A549 (cell line): ENCODE measurements at regions of chr11 and their contacts with region 1.

Region 1: DNA sequence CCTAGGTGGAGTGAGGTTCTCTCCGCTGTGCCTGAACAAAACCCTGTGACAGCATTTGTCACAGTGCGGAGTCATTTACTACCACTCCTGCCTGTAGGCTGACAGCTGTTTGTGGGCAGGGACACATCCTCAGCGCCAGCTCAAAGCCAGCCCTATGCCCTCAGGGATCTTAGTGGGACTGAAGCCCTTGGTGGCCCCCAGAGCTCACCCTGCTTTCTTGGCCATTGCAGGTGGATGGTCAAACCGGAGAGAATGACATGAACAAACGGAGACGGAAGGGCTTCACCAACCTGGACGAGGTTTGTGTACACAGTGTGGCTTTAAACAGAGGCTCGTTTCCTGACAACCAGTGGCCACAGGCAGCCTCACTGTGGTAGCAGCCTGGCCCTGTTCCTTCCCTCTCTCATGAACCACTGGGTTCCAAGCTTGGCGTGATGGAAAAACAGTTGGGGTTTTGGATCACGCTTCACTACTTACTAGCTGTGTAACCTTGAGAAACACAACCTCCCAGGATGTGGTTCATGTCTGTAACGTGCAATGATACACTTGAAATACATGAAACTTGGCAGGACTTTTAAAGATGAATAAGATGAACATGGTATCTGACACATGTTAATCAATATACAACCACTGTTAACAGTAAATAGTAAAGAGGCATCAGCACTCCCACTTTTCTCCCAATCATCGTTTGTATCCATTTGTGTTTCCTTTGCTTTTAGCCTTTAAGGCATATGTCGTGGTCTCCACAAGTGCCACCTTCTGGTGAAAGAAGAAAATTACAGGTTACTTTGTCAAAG is 125.8 kb downstream of the MICAL2 start:
- DNase-seq: peak; percentile 58 to 62
- ATAC-seq: peak; percentile 51 to 70; a peak in 4 of 6 replicates
- H3K4me3 ChIP-seq: no peak overlapping the region
- H3K27ac ChIP-seq: peak overlapping the region; percentile 81 to 87
- H3K4me1 ChIP-seq: peaks cover 58% of the 10 kb centered on the region
- CTCF ChIP-seq: peak; percentile 83
- EP300 ChIP-seq: no peak
- POLR2A ChIP-seq: no peak
- RAD21 ChIP-seq: peak; percentile 73 to 76

Region 2: GRCh38 chr11:12052676-12053605 is 183.2 kb before region 1 on chr11:
- CTCF ChIA-PET with region 1: interaction called, 115 read pairs
- POLR2A ChIA-PET with region 1: no interaction called
- DNase-seq: peak in 1 of 2 experiments; percentile 57
- ATAC-seq: peak in 1 of 2 experiments; percentile 48; a peak in 3 of 6 replicates
- H3K4me3 ChIP-seq: no peak overlapping the region
- H3K27ac ChIP-seq: peak overlapping the region; percentile 77 to 83
- H3K4me1 ChIP-seq: peaks cover 46% of the 10 kb centered on the region
- CTCF ChIP-seq: no peak
- EP300 ChIP-seq: no peak
- POLR2A ChIP-seq: no peak
- RAD21 ChIP-seq: peak; percentile 33 to 48; a peak in 4 of 5 replicates

Region 3: DNA sequence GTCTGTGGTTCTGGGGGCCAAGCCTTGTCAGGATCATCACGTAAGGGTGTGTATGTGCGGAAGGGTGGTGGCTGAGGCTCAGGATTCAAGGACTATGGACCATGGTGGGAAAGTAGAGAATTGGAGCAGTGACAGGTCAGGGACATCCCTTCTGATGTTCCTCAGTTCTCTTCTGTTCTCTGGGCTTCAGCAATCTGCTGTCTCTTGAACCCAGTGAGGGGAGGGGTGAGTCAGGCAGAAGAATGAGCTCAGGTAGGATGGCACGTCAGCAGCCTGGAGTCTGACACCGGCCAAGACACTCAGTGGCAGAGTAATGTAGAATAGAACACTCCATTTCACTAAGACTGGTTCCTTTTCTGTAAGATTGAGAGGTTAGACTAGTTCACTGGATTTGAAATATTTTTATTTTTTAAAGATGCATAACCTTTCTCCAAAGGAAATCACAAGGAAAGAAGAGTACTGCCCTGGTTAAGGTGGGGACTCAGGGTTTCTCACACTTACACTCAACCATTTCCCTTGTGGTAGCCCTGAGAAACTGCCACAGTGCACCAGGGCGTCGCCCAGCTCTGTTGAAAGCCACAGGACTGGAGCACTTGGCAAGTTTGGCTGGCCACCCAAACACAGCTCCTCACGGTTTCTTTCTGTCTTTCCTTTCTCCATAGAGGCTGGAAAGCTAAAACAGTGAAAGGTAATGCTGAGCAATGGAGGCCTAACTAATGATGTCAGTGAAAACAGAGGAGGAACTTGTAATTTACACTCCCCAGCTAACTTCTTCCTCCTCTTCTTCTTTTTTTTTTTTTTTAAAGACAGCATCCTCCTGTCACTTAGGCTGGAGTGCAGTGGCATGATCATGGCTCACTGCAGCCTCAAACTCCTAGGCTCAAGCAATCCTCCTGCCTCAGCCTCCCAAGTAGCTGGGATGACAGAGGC is 148.8 kb before region 1 on chr11:
- CTCF ChIA-PET with region 1: interaction called, 76 read pairs
- POLR2A ChIA-PET with region 1: interaction called, 4 read pairs
- DNase-seq: peak in 1 of 2 experiments; percentile 81
- ATAC-seq: peak; percentile 65 to 72
- H3K4me3 ChIP-seq: peak overlapping the region; percentile 24; the same call in 1 of the 3 replicates
- H3K27ac ChIP-seq: peak overlapping the region; percentile 96 to 97
- H3K4me1 ChIP-seq: peaks cover 71% of the 10 kb centered on the region
- CTCF ChIP-seq: no peak
- EP300 ChIP-seq: no peak
- POLR2A ChIP-seq: no peak
- RAD21 ChIP-seq: no peak; a peak in 1 of 5 replicates

Region 4: GRCh38 chr11:12122083-12122482 is 114.1 kb before region 1 on chr11:
- CTCF ChIA-PET with region 1: interaction called, 19 read pairs
- POLR2A ChIA-PET with region 1: interaction called, 3 read pairs
- DNase-seq: peak; percentile 48 to 50
- ATAC-seq: peak; percentile 58 to 83; a peak in 4 of 6 replicates
- H3K4me3 ChIP-seq: no peak overlapping the region
- H3K27ac ChIP-seq: peak overlapping the region in 1 of 2 experiments; percentile 51; a peak in 3 of 6 replicates
- H3K4me1 ChIP-seq: peaks cover 74% of the 10 kb centered on the region
- CTCF ChIP-seq: peak; percentile 35
- EP300 ChIP-seq: no peak
- POLR2A ChIP-seq: no peak
- RAD21 ChIP-seq: peak in 1 of 2 experiments; percentile 54; a peak in 2 of 5 replicates

Region 5: DNA sequence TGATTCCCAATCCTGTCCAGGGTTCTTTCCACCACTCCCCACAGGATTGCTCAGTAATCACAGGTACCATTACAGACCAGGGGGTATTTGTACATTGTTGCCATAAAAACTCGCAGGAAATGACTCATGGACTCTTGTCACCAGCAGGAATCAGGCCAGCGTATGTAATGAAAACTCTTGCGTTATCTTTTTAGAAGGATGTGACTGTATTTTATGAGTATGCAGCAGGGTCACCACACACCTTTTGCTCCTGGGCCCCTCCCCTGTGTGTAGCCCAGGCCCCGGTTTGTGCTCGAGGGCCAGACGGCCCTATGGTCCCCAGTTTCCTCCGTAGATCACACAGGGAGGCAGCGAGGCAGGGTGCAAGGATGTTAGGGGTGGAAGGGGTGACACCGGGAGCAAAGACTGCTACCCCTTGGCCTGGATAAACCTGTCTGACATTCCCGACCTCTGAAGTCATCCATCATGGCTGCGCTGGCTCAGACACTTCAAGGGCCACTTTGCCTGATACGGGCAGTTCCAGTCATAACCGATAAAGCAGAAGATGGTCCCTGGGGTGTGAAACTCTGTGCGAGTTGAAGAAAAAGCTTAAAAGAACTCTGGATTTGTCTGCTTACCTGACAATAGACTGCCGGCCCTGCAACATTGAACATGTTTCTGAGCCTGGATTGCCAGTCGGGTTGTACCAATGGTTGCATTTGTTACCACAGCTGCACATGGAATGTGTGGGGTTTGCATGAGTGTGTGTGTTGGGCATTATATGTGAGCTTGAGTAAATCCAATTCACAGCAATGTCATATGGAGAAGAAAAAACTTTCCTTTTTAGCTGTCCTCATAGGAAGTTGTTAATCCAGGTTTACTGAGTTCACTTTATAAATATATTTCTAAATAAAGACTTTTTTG is 68.8 kb before region 1 on chr11:
- CTCF ChIA-PET with region 1: interaction called, 10 read pairs
- POLR2A ChIA-PET with region 1: no interaction called
- DNase-seq: peak; percentile 63 to 92
- ATAC-seq: peak; percentile 83 to 87
- H3K4me3 ChIP-seq: no peak overlapping the region
- H3K27ac ChIP-seq: peak overlapping the region; percentile 83 to 90
- H3K4me1 ChIP-seq: peaks cover 71% of the 10 kb centered on the region
- CTCF ChIP-seq: no peak
- EP300 ChIP-seq: peak; percentile 85 to 91; a peak in 3 of 5 replicates
- POLR2A ChIP-seq: no peak
- RAD21 ChIP-seq: peak in 1 of 2 experiments; percentile 45; a peak in 4 of 5 replicates

Region 6: DNA sequence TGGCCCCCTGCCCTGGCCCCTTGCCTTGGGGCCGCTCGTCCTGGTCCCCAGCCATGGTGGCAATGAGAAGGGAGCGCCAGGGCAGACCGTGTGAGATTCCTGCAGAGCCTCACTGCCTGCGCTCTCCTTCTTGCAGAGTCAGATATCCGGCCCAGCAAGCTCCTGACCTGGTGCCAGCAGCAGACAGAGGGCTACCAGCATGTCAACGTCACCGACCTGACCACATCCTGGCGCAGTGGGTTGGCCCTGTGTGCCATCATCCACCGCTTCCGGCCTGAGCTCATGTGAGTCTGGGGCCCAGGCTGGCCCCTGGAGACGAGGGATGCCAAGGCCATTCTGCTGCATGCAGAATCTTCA is 11.6 kb before region 1 on chr11:
- CTCF ChIA-PET with region 1: interaction called, 37 read pairs
- POLR2A ChIA-PET with region 1: no interaction called
- DNase-seq: no peak
- ATAC-seq: no peak
- H3K4me3 ChIP-seq: no peak overlapping the region
- H3K27ac ChIP-seq: peak overlapping the region in 1 of 2 experiments; percentile 33; a peak in 1 of 6 replicates
- H3K4me1 ChIP-seq: peaks cover 7% of the 10 kb centered on the region
- CTCF ChIP-seq: no peak
- EP300 ChIP-seq: no peak
- POLR2A ChIP-seq: no peak
- RAD21 ChIP-seq: no peak

Region 7: DNA sequence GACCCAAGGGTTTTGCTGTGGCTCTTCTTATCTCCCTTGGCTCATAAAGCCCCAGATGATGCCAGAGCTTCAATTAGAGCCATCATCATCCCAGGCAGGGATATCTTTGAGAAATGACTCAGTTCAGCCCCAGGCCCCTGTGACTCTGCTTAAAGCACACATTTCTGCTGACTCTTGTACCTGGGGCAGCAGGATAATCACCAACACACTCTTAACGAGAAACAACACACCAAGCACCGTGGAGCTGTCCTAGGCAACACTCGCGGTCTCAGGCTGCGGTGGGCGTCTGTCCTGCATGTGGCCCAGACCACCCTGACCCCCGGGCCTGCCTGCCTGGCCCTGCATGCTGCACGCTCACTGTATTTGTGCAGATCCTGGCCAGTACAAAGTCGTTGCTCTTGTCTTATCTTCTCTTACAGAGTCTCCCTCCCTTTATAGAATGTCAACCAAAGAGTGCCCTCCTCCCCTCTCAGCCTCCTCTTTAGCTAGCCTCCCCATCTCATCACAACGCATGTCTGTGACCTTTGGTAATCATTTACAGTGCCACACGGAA is 27.1 kb after region 1 on chr11:
- CTCF ChIA-PET with region 1: interaction called, 22 read pairs
- POLR2A ChIA-PET with region 1: no interaction called
- DNase-seq: no peak
- ATAC-seq: no peak; a peak in 1 of 6 replicates
- H3K4me3 ChIP-seq: no peak overlapping the region
- H3K27ac ChIP-seq: no peak overlapping the region
- H3K4me1 ChIP-seq: peaks cover 5% of the 10 kb centered on the region
- CTCF ChIP-seq: no peak
- EP300 ChIP-seq: no peak
- POLR2A ChIP-seq: no peak
- RAD21 ChIP-seq: no peak

Region 8: GRCh38 chr11:12318791-12319438 is 82.8 kb after region 1 on chr11:
- CTCF ChIA-PET with region 1: no interaction called
- POLR2A ChIA-PET with region 1: no interaction called
- DNase-seq: no peak
- ATAC-seq: no peak
- H3K4me3 ChIP-seq: no peak overlapping the region
- H3K27ac ChIP-seq: no peak overlapping the region
- H3K4me1 ChIP-seq: no peaks in the 10 kb centered on the region
- CTCF ChIP-seq: no peak
- EP300 ChIP-seq: no peak
- POLR2A ChIP-seq: no peak
- RAD21 ChIP-seq: no peak

Region 9: DNA sequence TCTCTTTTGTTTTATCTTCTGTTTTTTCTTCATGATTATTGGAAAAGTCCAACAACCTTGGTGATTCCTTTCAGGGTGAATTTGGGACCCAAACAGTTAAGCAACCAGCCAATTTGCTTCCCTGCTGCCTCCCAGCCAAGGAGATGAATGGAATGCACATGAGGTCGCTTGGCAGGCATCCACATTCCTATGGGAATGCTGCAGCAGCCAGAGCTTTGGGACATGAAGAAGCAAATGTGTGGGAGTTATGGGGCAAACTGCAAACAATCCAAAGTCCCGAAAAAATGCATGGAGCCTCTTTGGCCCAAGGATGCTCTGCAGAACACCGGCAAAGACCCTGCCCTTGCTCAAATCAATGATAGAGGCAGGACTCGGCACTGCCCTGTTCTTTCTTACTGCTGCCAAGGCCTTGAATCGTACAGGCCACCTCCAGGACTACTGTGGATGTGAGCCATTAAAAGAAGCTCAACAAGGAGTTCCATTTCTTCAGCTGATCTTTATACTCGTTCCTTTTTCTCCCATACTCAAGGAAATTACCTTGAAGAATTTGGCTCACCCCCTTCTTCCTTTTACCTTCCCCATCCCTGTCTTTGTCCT is 320.7 kb after region 1 on chr11:
- CTCF ChIA-PET with region 1: no interaction called
- POLR2A ChIA-PET with region 1: no interaction called
- DNase-seq: peak; percentile 71 to 80
- ATAC-seq: peak; percentile 92 to 96
- H3K4me3 ChIP-seq: no peak overlapping the region
- H3K27ac ChIP-seq: peak overlapping the region; percentile 55 to 84
- H3K4me1 ChIP-seq: peaks cover 25% of the 10 kb centered on the region
- CTCF ChIP-seq: no peak
- EP300 ChIP-seq: peak in 1 of 2 experiments; percentile 22; a peak in 1 of 5 replicates
- POLR2A ChIP-seq: no peak
- RAD21 ChIP-seq: 0 out of 5 replicates have a peak, but pooled peaks of 1 of the 2 experiments have one; percentile 12